Activated CD4-positive, alpha-beta T cell treated with anti-CD3 and anti-CD28 coated beads for 36 hours (primary cell): ENCODE measurements at regions of chr7 and their contacts with region 1.

Region 1: DNA sequence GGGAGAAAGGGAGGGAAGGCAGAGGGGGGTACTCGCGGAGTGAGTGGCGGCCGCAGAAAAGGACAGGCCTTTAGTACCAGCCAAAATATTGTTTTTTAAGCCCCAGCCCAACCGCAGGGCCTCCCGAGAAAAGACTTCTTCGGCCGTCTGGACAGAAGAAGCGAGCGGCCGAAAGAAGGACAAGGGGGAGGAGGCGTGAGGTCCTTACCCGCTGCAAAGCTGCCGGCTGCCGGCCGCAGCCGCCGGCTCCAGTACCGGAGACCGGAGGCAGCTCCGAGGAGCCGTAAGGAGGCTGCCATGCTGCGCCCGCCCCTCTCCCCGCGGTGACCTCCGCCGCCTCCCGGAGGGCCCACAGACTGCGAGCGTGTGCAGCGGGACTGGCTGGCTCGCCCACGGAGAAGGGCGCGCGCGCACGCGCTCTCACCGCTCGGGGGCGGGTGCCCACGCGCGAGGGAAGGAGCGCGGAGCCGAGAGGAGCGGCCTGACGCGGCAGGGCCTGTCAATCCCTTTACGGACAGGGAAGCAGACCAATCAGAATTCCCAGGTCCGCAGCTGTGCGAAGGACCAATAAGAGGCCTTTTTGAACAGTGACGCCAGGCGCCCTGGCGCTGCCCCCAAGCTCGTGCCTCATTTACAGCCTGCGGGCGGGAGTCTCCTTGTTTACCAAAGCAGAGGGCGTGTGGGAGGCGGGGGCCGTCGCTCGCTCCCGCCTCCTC is at the start of gene HIBADH:
- DNase-seq: peak; percentile 95
- ATAC-seq: peak; percentile 99
- H3K4me3 Mint-ChIP-seq: peak within 1 kb of the TSS; percentile 82
- H3K27ac Mint-ChIP-seq: peak within 1 kb of the TSS; percentile 74
- H3K4me1 Mint-ChIP-seq: peaks cover 8% of the 10 kb centered on the region
- H3K27me3 Mint-ChIP-seq: no peaks in the 10 kb centered on the region
- total RNA-seq, gene HIBADH: 20.3 to 20.5 TPM

Region 2: DNA sequence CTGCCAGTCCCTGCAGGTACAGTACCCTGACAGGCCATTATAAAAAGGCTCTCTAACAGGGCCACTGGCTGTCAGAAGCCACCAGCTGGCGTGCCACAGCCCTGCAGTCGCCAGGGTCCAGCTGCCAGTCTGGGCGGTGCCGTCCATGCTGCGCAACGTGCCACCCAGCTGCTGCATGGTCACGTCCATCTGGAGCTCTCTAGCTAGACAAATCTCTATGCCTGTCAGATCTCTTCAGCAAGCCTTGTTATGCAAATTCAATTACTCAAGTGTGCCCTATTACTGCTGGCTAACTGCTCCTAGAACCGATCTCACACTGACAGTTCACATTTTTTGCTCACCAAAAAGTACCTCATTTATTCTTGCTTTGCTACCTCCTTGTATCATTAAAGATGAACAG is 75.8 kb before region 1 on chr7:
- CTCF ChIA-PET with region 1: no interaction called
- POLR2A ChIA-PET with region 1: no interaction called
- intact Hi-C with region 1: no loop called
- DNase-seq: no peak
- ATAC-seq: no peak
- H3K4me3 Mint-ChIP-seq: no peak overlapping the region
- H3K27ac Mint-ChIP-seq: no peak overlapping the region
- H3K4me1 Mint-ChIP-seq: no peaks in the 10 kb centered on the region
- H3K27me3 Mint-ChIP-seq: no peaks in the 10 kb centered on the region

Region 3: DNA sequence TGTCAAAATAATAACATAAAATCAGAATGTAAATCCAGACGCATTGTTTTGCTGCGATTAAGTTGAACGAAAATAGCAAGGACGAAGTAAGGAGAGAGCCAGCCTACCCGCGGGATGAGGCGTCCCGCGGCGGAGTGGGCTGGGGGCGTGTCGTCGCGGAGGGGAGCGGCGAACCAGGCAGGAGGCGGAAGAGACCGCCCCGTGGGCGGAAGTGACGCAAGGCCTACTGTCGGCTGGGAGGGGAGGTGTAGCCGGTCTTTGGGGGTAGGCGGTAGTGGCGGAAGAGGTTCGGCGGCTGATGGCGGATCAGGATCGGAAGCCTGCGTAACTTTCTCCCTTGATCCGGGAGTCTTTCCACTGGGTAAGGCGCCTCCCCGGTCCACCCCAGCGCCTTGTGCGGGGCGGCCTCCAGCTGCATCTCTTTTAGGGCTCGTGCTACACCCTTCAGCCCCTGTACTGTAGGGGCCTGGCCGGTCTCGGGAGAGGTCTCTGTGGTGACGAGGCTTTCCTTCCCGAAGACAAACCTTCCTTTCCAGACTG is 77.3 kb after region 1 on chr7 and contains the start of gene TAX1BP1:
- CTCF ChIA-PET with region 1: interaction called, 5 read pairs
- POLR2A ChIA-PET with region 1: interaction called, 13 read pairs
- intact Hi-C with region 1: loop called (anchors 1 kb)
- DNase-seq: peak; percentile 98
- ATAC-seq: peak; percentile 92
- H3K4me3 Mint-ChIP-seq: peak within 1 kb of the TSS; percentile 99
- H3K27ac Mint-ChIP-seq: peak within 1 kb of the TSS; percentile 99
- H3K4me1 Mint-ChIP-seq: peaks cover 34% of the 10 kb centered on the region
- H3K27me3 Mint-ChIP-seq: no peaks in the 10 kb centered on the region
- total RNA-seq, gene TAX1BP1: 101 to 109 TPM

Region 4: DNA sequence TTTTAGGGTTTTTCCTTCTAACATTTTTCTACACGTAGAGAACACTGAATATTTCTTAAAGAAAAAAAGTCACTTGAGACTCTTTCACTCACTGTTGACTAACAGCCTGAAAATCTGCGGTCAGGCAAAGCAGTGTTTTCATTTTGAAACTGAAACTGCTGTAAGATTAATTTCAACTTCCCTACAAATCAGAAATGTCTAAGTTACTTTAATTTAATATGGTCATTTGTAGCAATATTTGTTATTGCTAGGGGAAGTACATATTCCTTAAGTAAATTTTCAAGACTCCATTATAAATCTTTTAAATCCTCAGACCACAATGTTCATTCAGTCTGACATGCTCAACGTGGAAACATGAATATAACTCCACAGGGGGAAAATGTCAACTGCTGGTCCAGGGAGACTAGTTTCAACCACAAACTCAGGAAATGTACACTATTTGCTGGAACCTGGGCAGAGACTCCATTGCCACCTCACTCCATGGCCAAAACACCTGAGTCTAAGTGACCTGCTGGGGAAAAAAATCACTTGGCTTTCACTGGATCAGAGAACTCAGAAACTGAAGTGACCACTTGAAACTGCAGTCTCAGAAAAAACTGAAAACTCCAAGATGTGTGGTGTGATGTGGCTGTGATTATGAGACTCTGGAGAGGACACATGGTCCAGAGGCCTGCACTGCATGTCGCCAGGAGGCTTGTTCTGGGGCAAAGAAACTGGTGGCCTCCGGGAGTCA is 238.5 kb after region 1 on chr7:
- CTCF ChIA-PET with region 1: no interaction called
- POLR2A ChIA-PET with region 1: no interaction called
- intact Hi-C with region 1: loop called in 1 of 2 experiments (anchors 1 kb)
- DNase-seq: peak; percentile 49
- ATAC-seq: peak; percentile 67
- H3K4me3 Mint-ChIP-seq: no peak overlapping the region
- H3K27ac Mint-ChIP-seq: no peak overlapping the region
- H3K4me1 Mint-ChIP-seq: peaks cover 37% of the 10 kb centered on the region
- H3K27me3 Mint-ChIP-seq: no peaks in the 10 kb centered on the region